Activated CD8-positive, alpha-beta memory T cell treated with anti-CD3 and anti-CD28 coated beads, Interleukin-2, amount 10 ng/mL, durations not matched to agents 7 days and 5 days (primary cell): ENCODE measurements at regions of chr10 and their contacts with region 1.

Region 1: DNA sequence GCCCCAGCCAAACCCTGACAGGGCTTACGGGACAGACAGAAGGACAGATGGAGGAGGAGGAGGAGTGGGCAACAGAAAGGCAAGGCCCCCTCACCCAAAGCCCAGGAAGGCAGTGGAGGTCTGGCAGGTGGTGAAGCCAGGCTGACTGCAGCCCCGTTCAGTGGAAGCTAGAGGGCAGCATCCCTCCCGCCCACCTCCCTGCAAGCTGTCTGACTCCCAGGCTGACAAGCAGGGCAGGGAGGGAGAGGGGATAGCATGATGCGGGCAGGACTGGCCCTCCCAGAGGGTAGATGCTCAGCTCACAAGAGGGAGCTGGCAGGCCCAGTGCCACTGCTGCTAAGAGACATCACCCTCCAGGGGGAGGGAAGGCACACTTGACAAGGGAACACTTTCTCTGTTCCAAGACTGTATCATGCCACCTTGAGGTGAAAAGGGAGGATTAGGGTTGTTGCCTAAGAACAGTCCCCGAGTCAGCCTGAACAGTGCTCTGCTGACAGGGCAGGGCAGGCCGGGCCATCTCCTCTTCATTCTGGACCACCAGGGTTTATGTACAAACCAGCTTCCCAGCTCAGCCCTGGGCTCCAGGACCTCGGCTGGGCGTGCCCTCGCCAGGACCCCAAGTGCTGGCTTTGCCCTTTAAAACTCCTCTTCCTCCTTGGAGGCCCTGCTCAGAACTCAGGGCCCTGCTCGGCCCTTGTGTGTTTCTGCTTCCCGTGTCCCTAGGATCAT is 61.8 kb downstream of the RASGEF1A start:
- DNase-seq: peak; percentile 78
- ATAC-seq: peak; percentile 68
- H3K4me3 Mint-ChIP-seq: no peak overlapping the region
- H3K27ac Mint-ChIP-seq: no peak overlapping the region
- H3K4me1 Mint-ChIP-seq: peaks cover 8% of the 10 kb centered on the region
- H3K27me3 Mint-ChIP-seq: no peaks in the 10 kb centered on the region

Region 2: GRCh38 chr10:43048574-43049339 is 156.3 kb before region 1 on chr10:
- CTCF ChIA-PET with region 1: no interaction called
- DNase-seq: no peak
- ATAC-seq: no peak
- H3K4me3 Mint-ChIP-seq: no peak overlapping the region
- H3K27ac Mint-ChIP-seq: no peak overlapping the region
- H3K4me1 Mint-ChIP-seq: no peaks in the 10 kb centered on the region
- H3K27me3 Mint-ChIP-seq: peaks cover 28% of the 10 kb centered on the region

Region 3: GRCh38 chr10:43138021-43138756 is 66.9 kb before region 1 on chr10 and contains the start of gene CSGALNACT2:
- CTCF ChIA-PET with region 1: interaction called, 19 read pairs
- DNase-seq: peak; percentile 91
- ATAC-seq: peak; percentile 78
- H3K4me3 Mint-ChIP-seq: peak within 1 kb of the TSS; percentile 97
- H3K27ac Mint-ChIP-seq: peak within 1 kb of the TSS; percentile 100
- H3K4me1 Mint-ChIP-seq: peaks cover 73% of the 10 kb centered on the region
- H3K27me3 Mint-ChIP-seq: no peaks in the 10 kb centered on the region
- total RNA-seq, gene CSGALNACT2: 38.0 to 39.7 TPM

Region 4: DNA sequence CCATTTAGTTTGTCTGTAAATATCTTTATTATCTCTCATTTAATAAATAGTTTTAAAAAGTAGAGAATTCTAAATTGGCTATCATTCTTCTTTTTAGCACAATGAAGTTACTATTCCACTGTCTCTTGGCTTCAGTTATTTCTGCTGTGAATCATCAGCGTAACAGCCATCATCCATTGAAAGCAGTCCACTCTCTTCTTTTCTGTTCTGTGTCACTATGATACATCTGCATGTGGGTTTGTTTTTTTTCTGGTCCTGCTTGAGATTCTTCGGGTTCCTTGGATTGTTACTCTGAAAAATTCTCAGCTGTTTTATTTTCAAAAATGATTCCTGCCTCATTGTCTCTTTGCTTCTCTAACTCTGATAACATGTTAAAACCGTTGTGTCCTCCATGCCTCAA is 14.3 kb before region 1 on chr10:
- CTCF ChIA-PET with region 1: interaction called, 21 read pairs
- DNase-seq: no peak
- ATAC-seq: no peak
- H3K4me3 Mint-ChIP-seq: no peak overlapping the region
- H3K27ac Mint-ChIP-seq: no peak overlapping the region
- H3K4me1 Mint-ChIP-seq: no peaks in the 10 kb centered on the region
- H3K27me3 Mint-ChIP-seq: no peaks in the 10 kb centered on the region

Region 5: GRCh38 chr10:43229208-43230061 is 24.3 kb after region 1 on chr10:
- CTCF ChIA-PET with region 1: interaction called, 176 read pairs
- DNase-seq: peak; percentile 76
- ATAC-seq: peak; percentile 64
- H3K4me3 Mint-ChIP-seq: peak overlapping the region; percentile 72
- H3K27ac Mint-ChIP-seq: peak overlapping the region; percentile 75
- H3K4me1 Mint-ChIP-seq: peaks cover 59% of the 10 kb centered on the region
- H3K27me3 Mint-ChIP-seq: peaks cover 11% of the 10 kb centered on the region

Region 6: DNA sequence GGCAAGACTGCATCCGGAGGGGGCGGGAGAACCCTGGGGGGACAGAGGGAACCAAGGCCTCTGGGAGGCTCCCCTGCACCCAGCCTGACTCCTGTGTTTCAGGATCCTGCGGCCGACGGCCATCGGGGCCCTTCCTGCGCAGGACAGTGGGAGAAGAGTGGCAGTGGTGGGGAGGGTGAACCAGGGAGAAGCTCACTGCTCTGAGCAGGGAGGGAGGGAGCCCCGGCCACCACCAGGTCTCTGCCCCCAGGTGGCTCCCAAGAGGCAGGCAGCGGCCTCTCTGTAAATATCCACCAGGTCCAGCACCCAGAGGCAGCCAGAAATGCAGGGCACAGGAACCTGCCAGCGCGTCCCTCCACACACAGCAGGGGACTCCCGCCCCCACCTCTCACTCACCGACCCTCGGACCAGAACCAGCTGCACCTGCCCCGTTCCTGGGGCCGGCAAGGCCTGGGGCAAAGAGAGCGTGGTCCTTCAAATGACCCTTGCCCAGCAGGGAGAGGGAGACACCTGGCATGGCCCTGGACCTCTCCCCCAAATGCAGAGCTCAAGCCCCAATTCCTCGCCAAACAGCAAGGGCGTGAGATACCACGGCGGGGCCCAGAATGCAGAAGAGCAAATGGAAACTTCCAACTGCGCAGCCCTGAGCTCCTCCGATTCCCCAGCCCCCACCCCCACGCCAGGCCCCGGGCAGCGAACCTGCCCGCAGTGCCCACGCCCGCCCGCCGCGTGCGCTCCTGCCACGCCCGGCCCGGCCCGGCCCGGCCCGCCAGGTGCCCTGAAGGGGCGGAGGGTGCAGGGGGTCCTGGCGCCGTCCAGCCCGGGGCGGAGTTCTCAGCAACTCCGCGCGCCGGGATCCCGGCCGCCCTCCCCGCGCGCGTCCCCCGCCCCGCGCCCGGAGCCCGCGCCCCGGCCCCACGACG is 61.0 kb after region 1 on chr10:
- CTCF ChIA-PET with region 1: interaction called, 10 read pairs
- DNase-seq: peak; percentile 68
- ATAC-seq: peak; percentile 79
- H3K4me3 Mint-ChIP-seq: peak overlapping the region; percentile 58
- H3K27ac Mint-ChIP-seq: no peak overlapping the region
- H3K4me1 Mint-ChIP-seq: peaks cover 8% of the 10 kb centered on the region
- H3K27me3 Mint-ChIP-seq: peaks cover 57% of the 10 kb centered on the region

Region 7: DNA sequence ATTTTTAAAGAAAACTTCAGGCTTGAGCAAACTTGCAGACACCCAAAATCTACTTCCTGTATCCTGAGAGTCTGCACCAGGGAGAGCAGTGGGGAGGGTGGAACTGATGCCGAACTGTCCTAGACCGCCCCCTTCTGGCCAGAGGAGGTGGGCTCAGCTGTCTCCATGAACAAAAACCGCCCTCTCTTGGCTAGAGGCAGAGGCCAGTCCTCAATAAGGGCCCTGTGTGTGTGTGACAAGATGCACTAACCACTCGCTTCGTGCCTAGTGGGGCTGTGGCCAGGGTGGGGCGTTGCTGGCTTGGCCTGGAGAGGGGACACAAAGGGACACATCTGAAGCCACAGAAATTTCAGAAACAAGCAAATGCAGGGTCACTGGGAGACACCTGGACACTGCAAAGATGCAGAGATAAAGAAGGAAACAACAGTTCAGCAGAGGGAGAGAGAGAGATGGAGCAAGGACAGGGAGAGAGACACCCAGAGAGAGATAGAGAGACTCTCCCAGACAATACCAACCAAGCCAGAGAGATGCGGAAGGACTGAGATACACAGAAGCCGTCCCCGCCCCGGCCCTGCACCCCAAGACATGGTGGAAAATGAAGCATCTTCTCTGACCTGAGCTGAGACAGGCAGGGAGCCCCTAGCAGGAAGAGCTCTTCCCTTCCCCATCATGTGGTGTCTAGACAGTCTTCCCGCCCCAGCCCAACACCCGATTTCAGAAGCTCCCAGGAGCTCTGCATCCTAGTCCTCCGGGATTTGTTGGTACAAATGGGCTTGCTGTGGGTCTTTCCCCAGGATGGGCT is 143.6 kb after region 1 on chr10:
- CTCF ChIA-PET with region 1: interaction called, 41 read pairs
- DNase-seq: peak; percentile 93
- ATAC-seq: peak; percentile 100
- H3K4me3 Mint-ChIP-seq: no peak overlapping the region
- H3K27ac Mint-ChIP-seq: peak overlapping the region; percentile 58
- H3K4me1 Mint-ChIP-seq: peaks cover 24% of the 10 kb centered on the region
- H3K27me3 Mint-ChIP-seq: peaks cover 20% of the 10 kb centered on the region

Region 8: DNA sequence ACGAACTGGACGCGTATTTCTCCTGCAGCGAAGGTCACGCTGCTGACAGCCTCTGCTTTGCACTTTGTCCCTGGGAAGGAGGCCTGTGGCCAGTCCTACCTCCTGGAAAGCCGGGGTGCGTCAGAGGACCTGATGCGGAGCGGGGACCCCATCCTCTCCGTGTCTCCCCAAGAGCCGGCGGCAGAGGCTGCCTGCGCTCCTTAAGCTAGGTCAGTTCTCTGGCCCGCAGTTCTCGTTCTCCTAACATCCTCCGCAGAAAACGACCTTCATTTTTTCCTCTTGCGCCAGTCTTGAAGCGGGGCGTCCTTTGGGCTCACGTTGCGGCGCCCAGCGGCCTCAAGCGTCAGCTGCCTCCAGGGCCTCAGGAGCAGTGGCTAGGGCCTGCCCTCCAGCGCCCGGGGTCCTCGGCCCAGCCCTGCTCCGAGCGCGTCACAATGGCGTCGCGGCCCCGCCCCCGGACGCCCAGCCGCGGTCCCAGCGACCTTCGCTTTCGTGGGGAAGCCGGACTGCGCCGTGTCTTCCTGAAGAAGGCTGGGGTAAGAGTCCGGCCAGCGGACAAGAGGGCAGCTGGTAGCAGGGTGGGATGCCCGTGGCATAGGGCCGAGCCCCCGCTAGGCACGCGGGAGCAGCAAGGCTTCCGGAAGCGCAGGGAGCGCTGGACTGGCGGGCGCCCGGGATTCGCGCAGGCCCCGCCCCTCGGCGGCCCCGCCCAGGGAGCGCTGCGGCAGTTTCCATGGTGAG is 231.5 kb after region 1 on chr10 and contains the start of gene ZNF487:
- CTCF ChIA-PET with region 1: no interaction called
- DNase-seq: peak; percentile 93
- ATAC-seq: peak; percentile 96
- H3K4me3 Mint-ChIP-seq: peak within 1 kb of the TSS; percentile 88
- H3K27ac Mint-ChIP-seq: peak within 1 kb of the TSS; percentile 92
- H3K4me1 Mint-ChIP-seq: peaks cover 23% of the 10 kb centered on the region
- H3K27me3 Mint-ChIP-seq: no peaks in the 10 kb centered on the region
- total RNA-seq, gene ZNF487: 1.9 to 2.7 TPM